AG04449 (cell line): ENCODE measurements at regions of chr5 and their contacts with region 1.

Region 1: GRCh38 chr5:80083101-80083890 is 48.1 kb downstream of the THBS4 start:
- DNase-seq: no peak
- H3K4me3 ChIP-seq: peak overlapping the region; percentile 26
- CTCF ChIP-seq: peak; percentile 59

Region 2: DNA sequence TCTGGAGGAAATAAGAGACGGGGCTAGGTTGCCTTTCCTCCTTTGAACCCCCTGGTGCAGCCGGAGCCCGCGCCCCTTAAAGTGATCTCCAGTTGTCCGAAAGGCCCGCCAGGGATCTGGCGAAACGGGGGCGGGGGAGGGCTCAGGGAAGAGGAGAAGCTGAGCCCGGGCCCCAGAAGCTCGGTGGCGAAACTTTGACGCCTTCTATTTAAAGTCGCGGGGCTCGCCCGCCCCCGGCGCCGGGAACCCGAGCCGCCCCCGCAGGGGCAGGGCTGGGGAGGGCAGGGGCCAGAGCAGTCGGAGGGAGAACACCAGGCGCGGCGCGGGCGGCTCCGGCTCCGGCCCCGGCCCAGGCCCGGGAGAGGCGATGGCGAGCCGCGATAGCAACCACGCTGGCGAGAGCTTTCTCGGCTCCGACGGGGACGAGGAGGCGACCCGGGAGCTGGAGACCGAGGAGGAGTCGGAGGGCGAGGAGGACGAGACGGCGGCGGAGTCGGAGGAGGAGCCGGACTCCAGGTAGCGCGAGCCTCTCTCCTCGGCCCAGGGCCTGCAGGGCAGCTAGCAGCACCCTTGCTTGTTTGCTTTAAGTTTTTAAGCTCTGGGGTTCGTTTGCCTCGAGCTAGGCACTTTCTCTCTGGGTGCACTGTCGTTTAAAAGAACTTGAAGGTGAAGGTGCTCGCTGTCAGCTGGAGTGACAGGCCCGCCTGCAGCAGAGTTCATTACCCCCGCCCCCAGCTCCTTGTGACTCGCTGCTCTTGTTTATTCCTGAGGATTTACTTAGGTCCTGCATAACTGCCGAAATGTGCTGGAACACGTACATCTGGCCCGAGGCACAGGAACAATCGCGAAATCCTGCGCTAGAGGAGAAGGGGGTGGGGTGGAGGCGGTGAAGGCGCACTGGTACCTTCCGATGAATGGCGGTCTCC is 393.5 kb before region 1 on chr5 and contains the start of gene CMYA5:
- CTCF ChIA-PET with region 1: interaction called, 12 read pairs
- POLR2A ChIA-PET with region 1: no interaction called
- DNase-seq: no peak
- H3K4me3 ChIP-seq: peak within 1 kb of the TSS; percentile 54
- CTCF ChIP-seq: no peak

Region 3: DNA sequence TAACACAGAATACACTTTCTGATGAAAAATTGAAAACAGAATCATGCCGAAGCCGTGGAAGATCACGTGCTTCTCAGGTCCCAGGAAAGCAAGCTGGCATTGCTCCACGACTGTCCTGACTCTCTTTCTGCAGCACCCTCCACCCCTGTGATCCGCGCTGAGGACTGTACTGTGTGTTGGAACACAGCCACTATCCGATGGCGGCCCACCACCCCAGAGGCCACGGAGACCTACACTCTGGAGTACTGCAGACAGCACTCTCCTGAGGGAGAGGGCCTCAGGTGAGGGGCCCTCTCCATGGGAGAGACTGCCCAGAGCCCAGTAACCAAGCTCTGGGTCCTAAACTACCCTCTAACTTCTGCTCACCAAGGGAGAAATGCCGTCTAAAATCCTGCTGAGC is 320.4 kb before region 1 on chr5:
- CTCF ChIA-PET with region 1: no interaction called
- POLR2A ChIA-PET with region 1: no interaction called
- DNase-seq: no peak
- H3K4me3 ChIP-seq: no peak overlapping the region
- CTCF ChIP-seq: no peak

Region 4: GRCh38 chr5:79857714-79858409 is 225.4 kb before region 1 on chr5:
- CTCF ChIA-PET with region 1: interaction called, 10 read pairs
- POLR2A ChIA-PET with region 1: no interaction called
- DNase-seq: no peak
- H3K4me3 ChIP-seq: no peak overlapping the region
- CTCF ChIP-seq: peak; percentile 86

Region 5: DNA sequence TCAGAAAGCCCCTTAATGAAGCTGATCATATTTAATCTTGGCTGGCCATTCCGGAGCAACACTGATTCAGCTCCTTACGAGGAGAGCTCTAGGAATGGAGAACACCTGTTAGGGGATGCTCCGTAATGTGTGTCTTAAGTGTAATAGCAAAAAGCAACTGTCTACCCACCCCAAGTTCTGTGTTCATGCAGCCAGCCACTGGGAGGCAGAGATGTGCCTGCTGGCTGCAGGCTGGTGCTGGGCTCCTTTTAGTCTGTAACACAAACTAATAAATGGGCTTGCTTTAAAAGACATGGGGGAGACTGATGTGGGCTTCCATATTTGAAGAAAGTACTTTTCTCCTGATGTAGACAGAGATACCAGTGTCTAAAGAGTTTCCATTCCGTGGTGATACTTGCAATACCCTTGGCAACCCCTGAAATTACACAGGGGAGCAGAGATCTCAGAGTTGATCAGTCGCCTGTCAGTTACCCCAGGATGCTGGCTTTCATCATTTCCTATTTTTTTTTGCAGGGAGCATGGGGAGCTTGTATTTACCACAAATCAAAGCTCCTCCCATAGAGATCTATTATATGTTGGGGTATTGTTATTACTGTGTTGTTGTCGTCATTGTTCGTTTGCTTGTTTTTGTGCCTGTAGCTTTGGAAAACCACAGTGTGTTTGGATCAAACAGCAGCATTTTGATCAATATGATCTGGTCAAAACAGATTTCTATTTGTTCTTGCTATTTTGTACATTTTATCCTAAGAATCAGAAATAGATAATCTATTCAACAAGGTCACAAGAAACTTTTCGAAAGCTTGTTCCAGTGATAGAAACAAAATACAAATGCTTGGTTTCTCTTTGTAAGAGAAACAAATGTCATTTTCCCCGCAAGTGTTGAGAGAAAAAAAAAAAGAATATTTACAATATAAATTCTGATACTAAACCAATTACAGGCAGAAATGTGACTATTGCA is 158.1 kb before region 1 on chr5:
- CTCF ChIA-PET with region 1: interaction called, 40 read pairs
- POLR2A ChIA-PET with region 1: no interaction called
- DNase-seq: no peak
- H3K4me3 ChIP-seq: no peak overlapping the region
- CTCF ChIP-seq: peak; percentile 23

Region 6: GRCh38 chr5:80093796-80094195 is 10.5 kb after region 1 on chr5:
- CTCF ChIA-PET with region 1: interaction called, 21 read pairs
- POLR2A ChIA-PET with region 1: no interaction called
- DNase-seq: no peak
- H3K4me3 ChIP-seq: no peak overlapping the region
- CTCF ChIP-seq: no peak

Region 7: GRCh38 chr5:80308526-80308925 is 225.2 kb after region 1 on chr5:
- CTCF ChIA-PET with region 1: interaction called, 309 read pairs
- POLR2A ChIA-PET with region 1: no interaction called
- DNase-seq: no peak
- H3K4me3 ChIP-seq: no peak overlapping the region
- CTCF ChIP-seq: no peak

Region 8: DNA sequence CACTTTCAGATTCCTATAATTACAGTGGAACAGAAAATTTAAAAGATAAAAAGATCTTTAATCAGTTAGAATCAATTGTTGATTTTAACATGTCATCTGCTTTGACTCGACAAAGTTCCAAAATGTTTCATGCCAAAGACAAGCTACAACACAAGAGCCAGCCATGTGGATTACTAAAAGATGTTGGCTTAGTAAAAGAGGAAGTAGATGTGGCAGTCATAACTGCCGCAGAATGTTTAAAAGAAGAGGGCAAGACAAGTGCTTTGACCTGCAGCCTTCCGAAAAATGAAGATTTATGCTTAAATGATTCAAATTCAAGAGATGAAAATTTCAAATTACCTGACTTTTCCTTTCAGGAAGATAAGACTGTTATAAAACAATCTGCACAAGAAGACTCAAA is 354.0 kb after region 1 on chr5:
- CTCF ChIA-PET with region 1: no interaction called
- POLR2A ChIA-PET with region 1: no interaction called
- DNase-seq: no peak
- H3K4me3 ChIP-seq: no peak overlapping the region
- CTCF ChIP-seq: no peak